ENCODE measurements at regions of chr15 and their contacts with region 1.

Region 1: GRCh38 chr15:78750566-78750965 is 60.7 kb downstream of the ADAMTS7 start:
- DNase-seq: no peak
- H3K4me3 ChIP-seq: peak overlapping the region in 1 of 3 experiments; percentile 10
- H3K27ac ChIP-seq: no peak overlapping the region
- H3K4me1 ChIP-seq: no peaks in the 10 kb centered on the region
- H3K27me3 ChIP-seq: no peaks in the 10 kb centered on the region
- CTCF ChIP-seq: no peak
- POLR2A ChIP-seq: no peak

Region 2: GRCh38 chr15:78315686-78316282 is 434.8 kb before region 1 on chr15:
- CTCF ChIA-PET with region 1: interaction called, 3 read pairs
- POLR2A ChIA-PET with region 1: no interaction called
- dilution Hi-C with region 1: no loop called
- intact Hi-C with region 1: loop called (anchors 10 kb)
- DNase-seq: no peak
- H3K4me3 ChIP-seq: no peak overlapping the region
- H3K27ac ChIP-seq: no peak overlapping the region
- H3K4me1 ChIP-seq: no peaks in the 10 kb centered on the region
- H3K27me3 ChIP-seq: no peaks in the 10 kb centered on the region
- CTCF ChIP-seq: peak; percentile 12 to 20
- POLR2A ChIP-seq: no peak

Region 3: GRCh38 chr15:78638658-78639314 is 111.8 kb before region 1 on chr15:
- CTCF ChIA-PET with region 1: interaction called, 13 read pairs
- POLR2A ChIA-PET with region 1: no interaction called
- dilution Hi-C with region 1: no loop called
- intact Hi-C with region 1: loop called (anchors 1 kb)
- DNase-seq: peak; percentile 35
- H3K4me3 ChIP-seq: no peak overlapping the region
- H3K27ac ChIP-seq: no peak overlapping the region
- H3K4me1 ChIP-seq: peaks cover 2% of the 10 kb centered on the region
- H3K27me3 ChIP-seq: peaks cover 0 to 5% of the 10 kb centered on the region in 2 experiments
- CTCF ChIP-seq: peak; percentile 60 to 69
- POLR2A ChIP-seq: no peak

Region 4: DNA sequence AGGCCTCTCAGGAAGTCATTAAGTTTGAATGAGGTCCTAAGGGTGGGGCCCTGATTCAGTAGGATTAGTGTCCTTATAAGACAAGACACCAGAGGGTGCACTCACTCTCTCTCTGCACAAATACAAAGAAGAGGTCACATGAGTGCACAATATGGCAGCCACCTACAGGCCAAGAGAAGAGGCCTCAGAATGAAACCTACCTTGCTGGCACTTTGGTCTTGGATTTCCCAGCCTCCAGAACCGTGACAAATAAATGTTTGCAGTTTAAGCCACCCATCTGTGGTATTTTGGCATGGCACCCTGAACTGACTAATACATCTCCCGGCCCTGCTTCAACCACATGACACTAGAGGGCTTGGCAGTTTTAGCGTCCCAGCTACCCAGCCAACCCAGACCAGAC is 35.7 kb before region 1 on chr15:
- CTCF ChIA-PET with region 1: interaction called, 10 read pairs
- POLR2A ChIA-PET with region 1: no interaction called
- dilution Hi-C with region 1: no loop called
- intact Hi-C with region 1: loop called (anchors 1 kb)
- DNase-seq: no peak
- H3K4me3 ChIP-seq: no peak overlapping the region
- H3K27ac ChIP-seq: no peak overlapping the region
- H3K4me1 ChIP-seq: no peaks in the 10 kb centered on the region
- H3K27me3 ChIP-seq: peaks cover 4 to 14% of the 10 kb centered on the region in 2 experiments
- CTCF ChIP-seq: no peak
- POLR2A ChIP-seq: no peak

Region 5: GRCh38 chr15:78811124-78811824 is 60.7 kb after region 1 on chr15 and contains the start of gene ADAMTS7:
- CTCF ChIA-PET with region 1: interaction called, 10 read pairs
- POLR2A ChIA-PET with region 1: no interaction called
- dilution Hi-C with region 1: no loop called
- intact Hi-C with region 1: loop called (anchors 1 kb)
- DNase-seq: peak; percentile 62
- H3K4me3 ChIP-seq: peak within 1 kb of the TSS; percentile 69 to 94 (median 72)
- H3K27ac ChIP-seq: peak within 1 kb of the TSS; percentile 59
- H3K4me1 ChIP-seq: peaks cover 14% of the 10 kb centered on the region
- H3K27me3 ChIP-seq: no peaks in the 10 kb centered on the region
- CTCF ChIP-seq: peak; percentile 62 to 80
- POLR2A ChIP-seq: peak; percentile 79
- total RNA-seq, gene ADAMTS7: 56.4 and 64.7 TPM in 2 replicates

Measured in endothelial cell of umbilical vein (primary cell).